ENCODE measurements at regions of chr19 and their contacts with region 1.

Region 1: GRCh38 chr19:53792721-53793433 is 31.2 kb downstream of the NLRP12 start:
- DNase-seq: peak; percentile 90 to 95
- H3K4me3 ChIP-seq: no peak overlapping the region
- H3K27ac ChIP-seq: no peak overlapping the region
- H3K4me1 ChIP-seq: no peaks in the 10 kb centered on the region
- H3K27me3 ChIP-seq: no peaks in the 10 kb centered on the region
- CTCF ChIP-seq: peak; percentile 99

Region 2: DNA sequence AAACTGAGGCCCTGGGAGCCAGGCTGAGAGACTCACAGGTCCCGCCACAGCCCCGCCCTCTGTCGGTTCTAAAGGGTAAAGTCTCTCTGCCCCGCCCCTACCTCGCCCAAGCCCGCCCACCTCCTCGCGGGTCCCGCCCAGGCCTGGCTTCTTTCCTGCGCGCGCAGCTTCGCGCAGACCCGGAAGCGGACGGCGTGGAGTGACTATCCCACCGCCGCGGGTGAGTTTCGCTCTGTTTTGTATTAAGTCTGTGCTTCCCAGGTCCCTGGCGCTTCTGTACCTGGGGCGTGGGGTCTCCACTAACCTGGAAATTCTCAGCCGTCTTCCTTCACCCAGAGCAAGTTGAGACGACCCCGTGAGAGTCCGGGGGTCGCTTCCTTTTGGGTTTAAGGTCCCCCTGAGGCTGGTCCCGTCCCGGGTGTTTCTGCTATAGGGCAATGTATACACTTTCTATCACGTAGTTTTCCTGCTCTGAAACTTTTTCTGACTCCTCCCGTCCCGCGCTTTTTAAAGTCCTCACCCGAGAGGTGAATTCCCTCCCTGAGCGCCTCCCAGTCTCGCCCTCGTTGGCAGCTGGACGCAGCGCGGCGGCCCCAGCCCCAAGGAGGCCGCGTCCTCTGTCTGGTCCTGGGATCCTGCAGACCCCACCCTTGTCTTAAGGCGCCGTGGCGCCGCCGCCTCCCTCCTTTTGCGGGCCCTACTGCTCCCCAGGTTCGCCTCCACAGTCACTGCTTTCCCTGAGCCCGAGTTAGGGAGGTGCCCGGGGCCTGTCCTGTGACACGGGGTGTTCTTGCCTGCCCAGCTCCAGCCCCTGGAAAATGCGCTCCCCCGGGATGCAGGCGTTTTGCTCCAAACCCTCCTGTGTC is 397.7 kb before region 1 on chr19 and contains the start of gene ZNF765:
- CTCF ChIA-PET with region 1: no interaction called
- POLR2A ChIA-PET with region 1: interaction called, 11 read pairs
- intact Hi-C with region 1: no loop called
- DNase-seq: peak; percentile 72 to 98
- H3K4me3 ChIP-seq: peak within 1 kb of the TSS; percentile 88
- H3K27ac ChIP-seq: peak within 1 kb of the TSS; percentile 36
- H3K4me1 ChIP-seq: peaks cover 6% of the 10 kb centered on the region; the same call in 1 of the 2 replicates
- H3K27me3 ChIP-seq: no peaks in the 10 kb centered on the region
- CTCF ChIP-seq: peak; percentile 43
- total RNA-seq, gene ZNF765: 12.1 and 12.5 TPM in 2 replicates

Region 3: DNA sequence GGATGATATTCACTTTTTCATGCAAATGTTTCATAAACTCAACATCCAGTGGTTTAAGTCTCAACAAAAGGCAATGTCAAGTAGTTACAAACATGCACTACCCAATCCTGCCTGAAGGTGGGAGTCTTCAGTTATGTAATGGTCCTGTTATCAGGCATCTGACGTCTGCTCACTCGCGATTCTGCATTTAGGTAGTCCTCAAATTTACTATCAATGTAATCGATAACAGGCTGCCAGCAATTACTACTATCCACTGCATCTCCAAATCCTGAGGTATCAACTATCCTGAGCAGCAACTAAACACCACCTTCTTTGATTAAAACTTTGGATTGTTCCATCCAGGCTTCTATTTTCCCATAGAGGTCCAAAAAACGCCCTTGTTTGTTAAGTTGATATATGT is 19.9 kb before region 1 on chr19:
- CTCF ChIA-PET with region 1: interaction called, 8 read pairs
- POLR2A ChIA-PET with region 1: no interaction called
- intact Hi-C with region 1: loop called (anchors 1 kb)
- DNase-seq: peak; percentile 56 to 62
- H3K4me3 ChIP-seq: no peak overlapping the region
- H3K27ac ChIP-seq: no peak overlapping the region
- H3K4me1 ChIP-seq: peaks cover 14% of the 10 kb centered on the region
- H3K27me3 ChIP-seq: no peaks in the 10 kb centered on the region
- CTCF ChIP-seq: peak; percentile 92

Region 4: DNA sequence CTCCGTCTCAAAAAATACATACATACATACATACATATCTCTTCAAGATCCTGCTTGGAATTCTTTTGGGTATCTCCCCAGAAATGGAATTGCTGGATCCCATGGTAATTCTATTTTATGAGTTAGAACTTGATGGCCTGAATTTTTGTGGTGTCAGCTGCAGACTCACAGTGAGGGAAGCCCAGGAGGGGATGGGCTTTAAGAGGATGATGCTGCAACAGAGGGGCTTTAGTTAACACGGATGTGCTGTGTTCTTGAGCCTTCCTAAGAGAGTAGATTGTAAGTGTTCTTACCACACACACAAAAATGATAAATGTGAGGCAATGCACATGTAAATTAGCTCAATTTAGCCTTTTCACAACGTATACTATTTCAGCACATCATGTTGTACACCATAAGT is 230.3 kb after region 1 on chr19:
- CTCF ChIA-PET with region 1: interaction called, 7 read pairs
- POLR2A ChIA-PET with region 1: no interaction called
- intact Hi-C with region 1: loop called (anchors 5 kb)
- DNase-seq: no peak
- H3K4me3 ChIP-seq: no peak overlapping the region
- H3K27ac ChIP-seq: no peak overlapping the region
- H3K4me1 ChIP-seq: peaks cover 51% of the 10 kb centered on the region
- H3K27me3 ChIP-seq: no peaks in the 10 kb centered on the region
- CTCF ChIP-seq: no peak

Region 5: GRCh38 chr19:54102421-54103169 is 309.7 kb after region 1 on chr19 and contains the start of gene NDUFA3:
- CTCF ChIA-PET with region 1: no interaction called
- POLR2A ChIA-PET with region 1: no interaction called
- intact Hi-C with region 1: loop called (anchors 2 kb)
- DNase-seq: peak; percentile 96 to 99
- H3K4me3 ChIP-seq: peak within 1 kb of the TSS; percentile 68
- H3K27ac ChIP-seq: no peak within 1 kb of the TSS
- H3K4me1 ChIP-seq: 0 out of 2 replicates have a peak, but pooled peaks cover 7% of the 10 kb centered on the region
- H3K27me3 ChIP-seq: no peaks in the 10 kb centered on the region
- CTCF ChIP-seq: no peak
- total RNA-seq, gene NDUFA3: 119 and 134 TPM in 2 replicates